T-cell (primary cell): ENCODE measurements at regions of chr4 and their contacts with region 1.

Region 1: DNA sequence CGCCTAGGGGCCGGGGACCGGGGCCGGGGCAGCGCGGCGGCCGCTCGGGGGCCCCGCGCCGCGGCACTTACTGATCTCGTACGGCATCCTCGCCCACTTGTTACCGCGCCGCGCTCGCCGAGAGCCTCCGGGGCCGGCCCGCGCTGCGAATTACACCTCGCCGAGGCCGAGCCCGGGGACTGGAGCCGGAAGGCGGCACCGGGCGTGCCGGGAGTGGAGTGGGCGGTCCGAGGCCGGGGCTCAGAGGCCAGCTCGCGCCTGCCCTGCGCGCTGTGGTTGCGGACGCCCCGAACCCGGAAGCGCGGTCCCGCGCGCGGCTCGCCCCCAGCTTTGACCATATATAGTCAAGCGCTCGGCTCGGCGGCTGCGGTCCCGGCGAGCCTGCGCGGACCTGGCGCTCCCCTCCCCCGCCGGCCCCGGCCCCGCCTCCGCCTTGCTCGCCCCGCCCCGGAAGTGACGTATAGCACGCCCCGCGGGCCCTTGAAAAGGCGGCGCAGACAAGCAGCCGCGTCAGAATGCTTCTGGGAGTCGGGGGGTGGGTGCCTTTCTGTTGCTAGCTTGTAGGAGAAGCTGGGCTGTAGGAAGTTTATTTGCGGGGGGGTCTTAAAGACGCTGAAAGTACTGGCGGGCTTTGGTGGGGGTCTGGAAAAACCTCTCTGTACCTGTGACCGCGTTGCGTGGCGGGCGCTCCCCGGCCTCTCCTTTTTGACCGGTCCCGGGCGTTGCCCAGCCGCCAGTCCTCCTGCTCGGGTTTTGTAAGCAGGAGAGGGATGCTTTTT is at the start of gene WDR1:
- DNase-seq: peak; percentile 76 to 98 (median 88)
- ATAC-seq: peak; percentile 79 to 81 (median 80)
- H3K4me3 ChIP-seq: peak within 1 kb of the TSS; percentile 83 to 97
- H3K4me3 Mint-ChIP-seq: peak within 1 kb of the TSS; percentile 87 to 97 (median 90)
- H3K27ac ChIP-seq: peak within 1 kb of the TSS; percentile 97
- H3K27ac Mint-ChIP-seq: peak within 1 kb of the TSS; percentile 98
- H3K4me1 ChIP-seq: peaks cover 59 to 77% of the 10 kb centered on the region in 2 experiments
- H3K4me1 Mint-ChIP-seq: peaks cover 66 to 85% (median 75%) of the 10 kb centered on the region in 3 donors
- H3K27me3 ChIP-seq: no peaks in the 10 kb centered on the region
- H3K27me3 Mint-ChIP-seq: no peaks in the 10 kb centered on the region
- total RNA-seq, gene WDR1: 268 to 308 (median 304) TPM

Region 2: GRCh38 chr4:10074767-10075105 is 42.0 kb before region 1 on chr4:
- CTCF ChIA-PET with region 1: no interaction called
- POLR2A ChIA-PET with region 1: no interaction called
- DNase-seq: peak in 1 of 35 experiments; percentile 27
- ATAC-seq: peak in 3 of 4 experiments; percentile 32 to 33 (median 32)
- H3K4me3 ChIP-seq: no peak overlapping the region
- H3K4me3 Mint-ChIP-seq: no peak overlapping the region
- H3K27ac ChIP-seq: no peak overlapping the region
- H3K27ac Mint-ChIP-seq: peak overlapping the region in 1 of 2 donors; percentile 6
- H3K4me1 ChIP-seq: no peaks in the 10 kb centered on the region
- H3K4me1 Mint-ChIP-seq: peaks cover 0 to 8% (median 1%) of the 10 kb centered on the region in 3 donors
- H3K27me3 ChIP-seq: no peaks in the 10 kb centered on the region
- H3K27me3 Mint-ChIP-seq: no peaks in the 10 kb centered on the region

Region 3: DNA sequence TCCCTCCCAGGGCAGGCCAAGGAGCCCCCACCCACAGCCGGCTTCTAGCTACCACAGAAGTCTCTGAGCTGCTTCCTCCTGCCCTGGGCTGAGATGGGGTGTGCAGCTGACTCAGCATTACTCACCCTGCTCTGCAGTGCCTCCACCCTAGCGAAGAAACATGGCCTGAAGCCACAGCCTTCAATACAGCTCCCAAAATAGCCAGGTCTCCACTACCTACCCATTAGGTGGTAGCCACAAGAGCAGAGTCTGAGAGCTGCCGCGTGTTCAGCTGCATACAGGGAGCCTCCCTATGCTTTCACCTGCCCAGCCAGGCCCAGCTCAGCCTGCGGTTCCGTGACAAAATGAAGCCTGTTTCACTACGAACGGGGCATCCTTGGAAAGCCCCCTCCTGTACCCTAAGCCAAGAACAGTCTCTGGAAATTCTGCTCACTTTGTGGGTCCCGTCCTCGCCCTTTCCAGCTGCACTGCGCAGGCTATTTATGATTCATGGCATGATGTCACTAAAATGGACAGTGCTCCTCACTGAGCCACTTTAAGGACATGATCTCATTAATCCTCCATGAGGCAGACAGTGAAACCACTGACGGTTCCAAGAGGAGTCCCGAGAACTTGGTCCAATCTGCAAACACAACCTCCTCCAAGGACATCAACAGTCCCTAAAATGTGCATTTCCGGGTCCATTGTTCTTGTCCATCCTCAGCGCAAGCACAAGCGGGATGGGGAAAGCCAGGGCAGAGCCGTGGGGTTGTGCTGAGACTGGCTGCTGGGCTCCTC is 20.4 kb before region 1 on chr4:
- CTCF ChIA-PET with region 1: interaction called, 6 to 7 read pairs
- POLR2A ChIA-PET with region 1: interaction called, 9 to 23 read pairs
- DNase-seq: peak; percentile 40 to 83 (median 72)
- ATAC-seq: peak; percentile 78 to 90 (median 86)
- H3K4me3 ChIP-seq: no peak overlapping the region
- H3K4me3 Mint-ChIP-seq: peak overlapping the region; percentile 17 to 68 (median 28)
- H3K27ac ChIP-seq: peak overlapping the region; percentile 71
- H3K27ac Mint-ChIP-seq: peak overlapping the region; percentile 94 to 95
- H3K4me1 ChIP-seq: peaks cover 49 to 100% of the 10 kb centered on the region in 2 experiments
- H3K4me1 Mint-ChIP-seq: peaks cover 93 to 98% (median 95%) of the 10 kb centered on the region in 3 donors
- H3K27me3 ChIP-seq: no peaks in the 10 kb centered on the region
- H3K27me3 Mint-ChIP-seq: no peaks in the 10 kb centered on the region

Region 4: GRCh38 chr4:10183462-10183861 is 66.7 kb after region 1 on chr4:
- CTCF ChIA-PET with region 1: no interaction called
- POLR2A ChIA-PET with region 1: interaction called in 1 of 2 experiments, 13 read pairs
- DNase-seq: no peak
- ATAC-seq: no peak
- H3K4me3 ChIP-seq: no peak overlapping the region
- H3K4me3 Mint-ChIP-seq: no peak overlapping the region
- H3K27ac ChIP-seq: no peak overlapping the region
- H3K27ac Mint-ChIP-seq: no peak overlapping the region
- H3K4me1 ChIP-seq: peaks cover 2 to 8% of the 10 kb centered on the region in 2 experiments
- H3K4me1 Mint-ChIP-seq: peaks cover 15 to 30% (median 16%) of the 10 kb centered on the region in 3 donors
- H3K27me3 ChIP-seq: peaks cover 0 to 3% of the 10 kb centered on the region in 2 experiments
- H3K27me3 Mint-ChIP-seq: peaks cover 0 to 2% of the 10 kb centered on the region in 2 donors

Region 5: GRCh38 chr4:10364194-10364593 is 247.4 kb after region 1 on chr4:
- CTCF ChIA-PET with region 1: no interaction called
- POLR2A ChIA-PET with region 1: interaction called in 1 of 2 experiments, 11 read pairs
- DNase-seq: no peak
- ATAC-seq: no peak
- H3K4me3 ChIP-seq: no peak overlapping the region
- H3K4me3 Mint-ChIP-seq: no peak overlapping the region
- H3K27ac ChIP-seq: no peak overlapping the region
- H3K27ac Mint-ChIP-seq: no peak overlapping the region
- H3K4me1 ChIP-seq: no peaks in the 10 kb centered on the region
- H3K4me1 Mint-ChIP-seq: no peaks in the 10 kb centered on the region
- H3K27me3 ChIP-seq: no peaks in the 10 kb centered on the region
- H3K27me3 Mint-ChIP-seq: peaks cover 12 to 18% of the 10 kb centered on the region in 2 donors

Region 6: GRCh38 chr4:10461091-10461849 is 344.5 kb after region 1 on chr4:
- CTCF ChIA-PET with region 1: interaction called in 1 of 2 experiments, 11 read pairs
- POLR2A ChIA-PET with region 1: interaction called, 3 to 7 read pairs
- DNase-seq: peak; percentile 39 to 91 (median 66)
- ATAC-seq: peak; percentile 73 to 85 (median 77)
- H3K4me3 ChIP-seq: peak overlapping the region; percentile 55 to 73
- H3K4me3 Mint-ChIP-seq: peak overlapping the region; percentile 73 to 79 (median 74)
- H3K27ac ChIP-seq: no peak overlapping the region
- H3K27ac Mint-ChIP-seq: no peak overlapping the region
- H3K4me1 ChIP-seq: peaks cover 4 to 31% of the 10 kb centered on the region in 2 experiments
- H3K4me1 Mint-ChIP-seq: peaks cover 22 to 34% (median 24%) of the 10 kb centered on the region in 3 donors
- H3K27me3 ChIP-seq: peaks cover 4 to 13% of the 10 kb centered on the region in 2 experiments
- H3K27me3 Mint-ChIP-seq: peaks cover 26 to 37% of the 10 kb centered on the region in 2 donors

Region 7: DNA sequence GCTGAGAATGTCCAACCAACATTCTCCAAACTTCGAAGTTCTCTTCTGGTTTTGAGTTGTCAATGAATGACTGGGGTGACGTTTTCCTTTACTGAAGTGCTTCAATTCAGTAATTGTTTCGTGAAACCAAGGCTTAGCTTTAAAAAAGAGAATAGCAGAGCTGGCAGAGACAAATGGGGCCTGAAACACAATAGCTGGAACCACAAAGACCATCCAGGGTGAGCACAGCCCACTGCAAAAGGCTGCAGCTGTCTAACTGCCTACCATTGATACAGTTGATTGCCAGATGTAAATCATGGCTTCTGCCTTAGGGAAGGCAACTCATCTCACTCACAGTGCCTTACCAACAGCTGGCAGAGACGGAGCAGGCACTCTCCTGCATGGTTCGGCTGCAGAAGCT is 419.1 kb after region 1 on chr4:
- CTCF ChIA-PET with region 1: interaction called in 1 of 2 experiments, 3 read pairs
- POLR2A ChIA-PET with region 1: interaction called in 1 of 2 experiments, 11 read pairs
- DNase-seq: no peak
- ATAC-seq: no peak
- H3K4me3 ChIP-seq: no peak overlapping the region
- H3K4me3 Mint-ChIP-seq: no peak overlapping the region
- H3K27ac ChIP-seq: no peak overlapping the region
- H3K27ac Mint-ChIP-seq: no peak overlapping the region
- H3K4me1 ChIP-seq: no peaks in the 10 kb centered on the region
- H3K4me1 Mint-ChIP-seq: no peaks in the 10 kb centered on the region
- H3K27me3 ChIP-seq: peaks cover 0 to 7% of the 10 kb centered on the region in 2 experiments
- H3K27me3 Mint-ChIP-seq: no peaks in the 10 kb centered on the region